ENCODE measurements at regions of chr12 and their contacts with region 1.

Region 1: GRCh38 chr12:128116537-128116936 is 150.4 kb upstream of the TMEM132C start:
- DNase-seq: no peak
- H3K4me3 ChIP-seq: no peak overlapping the region
- H3K27ac ChIP-seq: no peak overlapping the region
- H3K4me1 ChIP-seq: no peaks in the 10 kb centered on the region
- H3K27me3 ChIP-seq: no peaks in the 10 kb centered on the region
- CTCF ChIP-seq: no peak
- EP300 ChIP-seq: no peak
- POLR2A ChIP-seq: no peak

Region 2: GRCh38 chr12:128052331-128052730 is 64.2 kb before region 1 on chr12:
- intact Hi-C with region 1: no loop called
- DNase-seq: no peak
- H3K4me3 ChIP-seq: no peak overlapping the region
- H3K27ac ChIP-seq: no peak overlapping the region
- H3K4me1 ChIP-seq: no peaks in the 10 kb centered on the region
- H3K27me3 ChIP-seq: no peaks in the 10 kb centered on the region
- CTCF ChIP-seq: no peak
- EP300 ChIP-seq: no peak
- POLR2A ChIP-seq: no peak

Region 3: GRCh38 chr12:129871991-129872972 is 1755.7 kb after region 1 on chr12:
- intact Hi-C with region 1: loop called in 1 of 4 experiments (anchors 5 kb)
- DNase-seq: no peak
- H3K4me3 ChIP-seq: no peak overlapping the region
- H3K27ac ChIP-seq: no peak overlapping the region
- H3K4me1 ChIP-seq: no peaks in the 10 kb centered on the region
- H3K27me3 ChIP-seq: no peaks in the 10 kb centered on the region
- CTCF ChIP-seq: no peak
- EP300 ChIP-seq: no peak
- POLR2A ChIP-seq: no peak